ENCODE measurements at regions of chr12 and their contacts with region 1.

Region 1: GRCh38 chr12:14995583-14996425 is 23.0 kb downstream of the PDE6H start:
- DNase-seq: peak; percentile 15
- H3K4me3 ChIP-seq: no peak overlapping the region; a peak in 1 of 4 replicates
- H3K27ac ChIP-seq: no peak overlapping the region
- H3K4me1 ChIP-seq: peaks cover 0 to 20% of the 10 kb centered on the region in 2 experiments
- H3K27me3 ChIP-seq: no peaks in the 10 kb centered on the region
- CTCF ChIP-seq: peak; percentile 83
- EP300 ChIP-seq: no peak
- RAD21 ChIP-seq: peak; percentile 84

Region 2: GRCh38 chr12:14629832-14630710 is 365.7 kb before region 1 on chr12:
- CTCF ChIA-PET with region 1: interaction called, 11 read pairs
- POLR2A ChIA-PET with region 1: no interaction called
- DNase-seq: peak; percentile 53
- H3K4me3 ChIP-seq: no peak overlapping the region; a peak in 1 of 4 replicates
- H3K27ac ChIP-seq: no peak overlapping the region
- H3K4me1 ChIP-seq: no peaks in the 10 kb centered on the region
- H3K27me3 ChIP-seq: no peaks in the 10 kb centered on the region; the same call in 1 of the 2 replicates
- CTCF ChIP-seq: peak; percentile 96
- EP300 ChIP-seq: no peak
- RAD21 ChIP-seq: peak; percentile 94

Region 3: DNA sequence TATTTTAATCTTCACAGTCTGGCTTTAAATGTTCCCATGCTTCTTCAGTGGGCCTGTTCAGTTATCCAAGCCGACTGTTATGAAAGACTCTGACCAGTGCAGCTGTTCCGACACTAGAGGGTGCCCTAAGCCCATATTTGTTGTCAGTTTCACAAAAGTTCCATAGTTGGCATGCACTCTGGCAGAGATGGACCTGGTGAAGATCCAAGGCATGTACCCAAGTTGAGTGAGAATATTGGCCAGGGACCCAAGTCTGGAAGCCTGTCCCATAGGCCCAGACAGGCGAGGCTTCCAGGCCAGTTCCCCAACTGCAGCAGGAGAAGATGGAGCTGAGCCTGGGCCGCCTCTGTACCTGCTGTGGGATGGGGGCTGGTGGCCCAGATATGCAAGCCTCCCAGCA is 272.0 kb before region 1 on chr12:
- CTCF ChIA-PET with region 1: interaction called, 12 read pairs
- POLR2A ChIA-PET with region 1: no interaction called
- DNase-seq: peak; percentile 47
- H3K4me3 ChIP-seq: no peak overlapping the region
- H3K27ac ChIP-seq: no peak overlapping the region
- H3K4me1 ChIP-seq: no peaks in the 10 kb centered on the region
- H3K27me3 ChIP-seq: no peaks in the 10 kb centered on the region
- CTCF ChIP-seq: peak; percentile 59
- EP300 ChIP-seq: no peak
- RAD21 ChIP-seq: peak; percentile 76

Region 4: GRCh38 chr12:14810953-14811483 is 184.8 kb before region 1 on chr12:
- CTCF ChIA-PET with region 1: interaction called, 11 read pairs
- POLR2A ChIA-PET with region 1: no interaction called
- DNase-seq: no peak
- H3K4me3 ChIP-seq: no peak overlapping the region
- H3K27ac ChIP-seq: no peak overlapping the region
- H3K4me1 ChIP-seq: no peaks in the 10 kb centered on the region
- H3K27me3 ChIP-seq: no peaks in the 10 kb centered on the region
- CTCF ChIP-seq: peak; percentile 66
- EP300 ChIP-seq: no peak
- RAD21 ChIP-seq: peak; percentile 56

Region 5: DNA sequence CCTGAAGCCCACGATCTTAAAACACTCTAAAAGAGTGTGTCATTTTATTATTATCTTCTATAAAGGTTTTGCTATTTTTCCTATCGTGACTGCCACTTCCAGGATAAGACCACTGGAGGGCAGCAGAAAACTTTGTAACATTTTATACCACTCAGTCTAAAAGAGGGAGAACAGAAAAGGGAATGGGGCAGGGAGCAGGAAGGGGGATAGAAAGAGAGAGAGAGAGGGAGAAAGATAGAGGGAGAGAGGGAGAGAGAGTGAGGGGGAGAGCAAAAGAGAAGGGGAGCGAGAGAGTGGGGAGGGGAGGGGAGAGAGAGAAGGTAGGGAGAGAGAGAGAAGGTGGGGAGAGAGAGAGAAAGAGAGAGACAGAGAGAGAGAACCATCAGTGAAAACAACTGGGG is 150.5 kb before region 1 on chr12:
- CTCF ChIA-PET with region 1: interaction called, 43 read pairs
- POLR2A ChIA-PET with region 1: interaction called, 4 read pairs
- DNase-seq: peak; percentile 58
- H3K4me3 ChIP-seq: no peak overlapping the region
- H3K27ac ChIP-seq: no peak overlapping the region
- H3K4me1 ChIP-seq: peaks cover 11 to 14% of the 10 kb centered on the region in 2 experiments; a peak in 3 of 4 replicates
- H3K27me3 ChIP-seq: no peaks in the 10 kb centered on the region
- CTCF ChIP-seq: peak; percentile 88
- EP300 ChIP-seq: no peak
- RAD21 ChIP-seq: peak; percentile 90

Region 6: DNA sequence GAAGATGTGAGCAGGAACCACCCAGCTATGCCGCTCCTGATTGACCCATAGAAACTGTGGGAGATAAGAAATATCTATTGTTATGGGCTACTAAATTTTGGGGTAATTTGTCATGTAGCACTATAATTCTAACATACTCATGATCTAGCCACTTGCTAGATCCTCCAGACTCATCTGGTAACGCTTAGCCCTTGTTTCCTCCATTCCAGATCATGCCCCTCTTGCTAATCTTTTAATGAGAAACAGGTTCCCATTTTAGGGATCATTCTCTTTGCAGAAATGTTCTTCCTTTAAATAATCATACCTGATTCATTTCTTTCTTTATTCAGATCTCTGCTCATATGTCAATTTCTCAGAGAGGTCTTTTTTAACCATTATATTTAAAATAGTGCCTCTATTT is 30.6 kb before region 1 on chr12:
- CTCF ChIA-PET with region 1: no interaction called
- POLR2A ChIA-PET with region 1: no interaction called
- DNase-seq: peak; percentile 11
- H3K4me3 ChIP-seq: no peak overlapping the region
- H3K27ac ChIP-seq: peak overlapping the region in 1 of 2 experiments; percentile 22; a peak in 2 of 4 replicates
- H3K4me1 ChIP-seq: peaks cover 4 to 11% of the 10 kb centered on the region in 2 experiments; a peak in 3 of 4 replicates
- H3K27me3 ChIP-seq: no peaks in the 10 kb centered on the region
- CTCF ChIP-seq: no peak
- EP300 ChIP-seq: no peak
- RAD21 ChIP-seq: no peak

Measured in SK-N-SH (cell line).